CD14-positive monocyte (primary cell): ENCODE measurements at regions of chr15 and their contacts with region 1.

Region 1: GRCh38 chr15:92077353-92078085 is 224.0 kb downstream of the SLCO3A1 start:
- DNase-seq: peak; percentile 37 to 73 (median 55)
- H3K4me3 ChIP-seq: no peak overlapping the region
- H3K4me3 Mint-ChIP-seq: no peak overlapping the region
- H3K27ac ChIP-seq: peak overlapping the region; percentile 22 to 27
- H3K27ac Mint-ChIP-seq: peak overlapping the region in 2 of 7 donors; percentile 32 to 74
- H3K4me1 ChIP-seq: peaks cover 25 to 31% of the 10 kb centered on the region in 2 donors
- H3K4me1 Mint-ChIP-seq: peaks cover 50% of the 10 kb centered on the region
- H3K27me3 ChIP-seq: no peaks in the 10 kb centered on the region
- H3K27me3 Mint-ChIP-seq: peaks cover 0 to 1% (median 0%) of the 10 kb centered on the region in 3 donors
- CTCF ChIP-seq: peak; percentile 66

Region 2: DNA sequence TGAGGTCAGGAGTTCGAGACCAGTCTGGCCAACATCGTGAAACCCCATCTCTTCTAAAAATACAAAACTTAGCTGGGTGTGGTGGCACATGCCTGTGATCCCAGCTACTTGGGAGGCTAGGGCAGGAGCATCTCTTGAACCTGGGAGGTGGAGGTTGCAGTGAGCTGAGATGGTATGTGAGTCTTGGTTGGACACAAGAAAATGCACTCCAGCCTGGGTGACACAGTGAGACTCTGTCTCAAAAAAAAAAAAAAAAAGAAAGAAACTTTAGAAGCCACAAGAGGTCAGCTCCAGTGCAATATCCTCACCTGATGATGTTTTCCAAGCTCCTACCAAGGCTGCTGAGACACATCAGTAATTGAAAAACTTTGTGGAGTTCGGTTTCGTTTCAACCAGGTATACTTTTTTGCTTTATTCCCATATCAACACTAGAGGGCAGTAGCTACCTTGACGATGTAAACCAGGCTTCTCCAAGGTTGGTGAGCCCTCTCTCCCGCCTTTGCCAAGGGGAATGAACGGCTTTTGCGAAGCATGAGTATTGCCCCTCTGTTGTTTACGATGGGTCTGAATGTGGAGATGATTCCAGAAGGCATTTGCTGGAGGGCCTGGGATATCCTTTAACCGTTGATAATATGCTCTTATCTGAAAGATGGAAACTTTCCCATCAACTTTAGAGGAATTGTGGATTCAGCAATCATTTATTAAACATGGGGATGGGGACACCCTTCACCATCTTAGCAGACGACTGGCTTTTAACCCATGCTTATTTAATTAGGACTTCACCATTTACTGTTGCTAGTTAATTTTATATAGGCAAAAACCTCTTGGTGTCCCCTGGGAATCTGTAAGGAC is 774.7 kb before region 1 on chr15:
- intact Hi-C with region 1: loop called (anchors 2 to 5 kb)
- DNase-seq: peak; percentile 25 to 57 (median 51)
- H3K4me3 ChIP-seq: no peak overlapping the region
- H3K4me3 Mint-ChIP-seq: no peak overlapping the region
- H3K27ac ChIP-seq: no peak overlapping the region
- H3K27ac Mint-ChIP-seq: no peak overlapping the region
- H3K4me1 ChIP-seq: peaks cover 4% of the 10 kb centered on the region in 2 donors
- H3K4me1 Mint-ChIP-seq: peaks cover 12% of the 10 kb centered on the region
- H3K27me3 ChIP-seq: peaks cover 5 to 6% of the 10 kb centered on the region in 2 donors
- H3K27me3 Mint-ChIP-seq: peaks cover 2 to 10% (median 7%) of the 10 kb centered on the region in 3 donors
- CTCF ChIP-seq: peak; percentile 77

Region 3: DNA sequence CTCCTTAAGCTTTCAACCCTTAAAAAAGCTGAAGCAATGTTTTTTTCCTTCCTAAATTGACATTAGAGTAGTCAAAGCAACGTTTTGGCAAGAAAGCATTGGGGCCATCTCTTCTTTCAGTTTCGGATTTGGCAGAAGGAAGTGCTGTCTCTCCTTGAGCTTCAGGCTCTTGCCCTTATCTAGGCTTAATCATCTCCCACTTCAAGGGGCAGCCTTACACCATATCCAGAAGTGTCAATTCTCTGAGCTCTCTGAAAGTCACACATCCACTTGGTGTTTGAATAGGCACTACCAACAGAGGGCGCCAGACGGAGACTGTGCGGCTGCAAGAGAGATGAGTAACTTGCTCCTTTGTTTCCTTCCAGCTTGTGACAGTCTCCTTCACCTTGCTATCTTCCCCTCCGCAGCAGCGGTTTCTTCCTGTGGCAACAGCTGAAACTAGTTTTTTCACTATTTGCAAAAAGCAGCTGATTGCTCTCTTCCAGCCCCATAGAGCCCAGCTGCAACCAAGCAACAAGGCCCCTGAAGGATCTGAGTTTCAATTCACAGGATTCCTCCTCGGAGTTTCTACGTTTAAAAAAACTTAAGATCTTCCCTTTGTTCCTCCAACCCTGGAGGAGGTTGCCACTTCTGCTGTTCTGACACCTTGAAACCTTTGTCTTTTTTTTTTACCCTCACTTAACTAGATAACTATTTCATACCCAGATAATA is 371.0 kb before region 1 on chr15:
- intact Hi-C with region 1: loop called in 1 of 2 experiments (anchors 10 kb)
- DNase-seq: peak; percentile 72 to 85 (median 74)
- H3K4me3 ChIP-seq: no peak overlapping the region
- H3K4me3 Mint-ChIP-seq: peak overlapping the region; percentile 16 to 75
- H3K27ac ChIP-seq: peak overlapping the region in 1 of 2 donors; percentile 3
- H3K27ac Mint-ChIP-seq: peak overlapping the region in 5 of 7 donors; percentile 20 to 64 (median 50)
- H3K4me1 ChIP-seq: peaks cover 13 to 19% of the 10 kb centered on the region in 2 donors
- H3K4me1 Mint-ChIP-seq: peaks cover 22% of the 10 kb centered on the region
- H3K27me3 ChIP-seq: peaks cover 0 to 3% of the 10 kb centered on the region in 2 donors
- H3K27me3 Mint-ChIP-seq: peaks cover 6 to 7% (median 7%) of the 10 kb centered on the region in 3 donors
- CTCF ChIP-seq: peak; percentile 95

Region 4: GRCh38 chr15:91885714-91886270 is 191.7 kb before region 1 on chr15:
- intact Hi-C with region 1: loop called in 1 of 2 experiments (anchors 10 kb)
- DNase-seq: peak; percentile 15 to 47 (median 21)
- H3K4me3 ChIP-seq: no peak overlapping the region
- H3K4me3 Mint-ChIP-seq: no peak overlapping the region
- H3K27ac ChIP-seq: peak overlapping the region; percentile 14 to 30
- H3K27ac Mint-ChIP-seq: peak overlapping the region; percentile 1 to 84 (median 68)
- H3K4me1 ChIP-seq: peaks cover 7 to 10% of the 10 kb centered on the region in 2 donors
- H3K4me1 Mint-ChIP-seq: peaks cover 45% of the 10 kb centered on the region
- H3K27me3 ChIP-seq: no peaks in the 10 kb centered on the region
- H3K27me3 Mint-ChIP-seq: no peaks in the 10 kb centered on the region
- CTCF ChIP-seq: peak; percentile 24

Region 5: GRCh38 chr15:91942676-91943576 is 134.6 kb before region 1 on chr15:
- intact Hi-C with region 1: loop called (anchors 5 to 10 kb)
- DNase-seq: peak; percentile 96 to 99 (median 99)
- H3K4me3 ChIP-seq: peak overlapping the region in 1 of 3 experiments; percentile 62
- H3K4me3 Mint-ChIP-seq: peak overlapping the region; percentile 56 to 86
- H3K27ac ChIP-seq: peak overlapping the region; percentile 93 to 95
- H3K27ac Mint-ChIP-seq: peak overlapping the region; percentile 93 to 99 (median 98)
- H3K4me1 ChIP-seq: peaks cover 85 to 96% of the 10 kb centered on the region in 2 donors
- H3K4me1 Mint-ChIP-seq: peaks cover 92% of the 10 kb centered on the region
- H3K27me3 ChIP-seq: no peaks in the 10 kb centered on the region
- H3K27me3 Mint-ChIP-seq: peaks cover 0 to 2% (median 0%) of the 10 kb centered on the region in 3 donors
- CTCF ChIP-seq: no peak

Region 6: GRCh38 chr15:91947683-91948608 is 129.6 kb before region 1 on chr15:
- intact Hi-C with region 1: loop called (anchors 5 to 10 kb)
- DNase-seq: peak in 1 of 3 donors; percentile 54
- H3K4me3 ChIP-seq: peak overlapping the region; percentile 11 to 54 (median 17)
- H3K4me3 Mint-ChIP-seq: peak overlapping the region; percentile 68 to 80
- H3K27ac ChIP-seq: peak overlapping the region; percentile 93 to 98
- H3K27ac Mint-ChIP-seq: peak overlapping the region; percentile 97 to 100 (median 99)
- H3K4me1 ChIP-seq: peaks cover 95 to 96% of the 10 kb centered on the region in 2 donors
- H3K4me1 Mint-ChIP-seq: peaks cover 100% of the 10 kb centered on the region
- H3K27me3 ChIP-seq: no peaks in the 10 kb centered on the region
- H3K27me3 Mint-ChIP-seq: peaks cover 0 to 2% (median 2%) of the 10 kb centered on the region in 3 donors
- CTCF ChIP-seq: no peak